CD14-positive monocyte (primary cell): ENCODE measurements at regions of chr3 and their contacts with region 1.

Region 1: GRCh38 chr3:190204200-190204599 is 83.5 kb upstream of the P3H2 start:
- DNase-seq: no peak
- H3K4me3 ChIP-seq: no peak overlapping the region
- H3K4me3 Mint-ChIP-seq: no peak overlapping the region
- H3K27ac ChIP-seq: no peak overlapping the region
- H3K27ac Mint-ChIP-seq: peak overlapping the region in 1 of 7 donors; percentile 33
- H3K4me1 ChIP-seq: peaks cover 0 to 2% of the 10 kb centered on the region in 2 donors
- H3K4me1 Mint-ChIP-seq: peaks cover 7% of the 10 kb centered on the region
- H3K27me3 ChIP-seq: no peaks in the 10 kb centered on the region
- H3K27me3 Mint-ChIP-seq: peaks cover 0 to 5% (median 3%) of the 10 kb centered on the region in 3 donors
- CTCF ChIP-seq: no peak

Region 2: DNA sequence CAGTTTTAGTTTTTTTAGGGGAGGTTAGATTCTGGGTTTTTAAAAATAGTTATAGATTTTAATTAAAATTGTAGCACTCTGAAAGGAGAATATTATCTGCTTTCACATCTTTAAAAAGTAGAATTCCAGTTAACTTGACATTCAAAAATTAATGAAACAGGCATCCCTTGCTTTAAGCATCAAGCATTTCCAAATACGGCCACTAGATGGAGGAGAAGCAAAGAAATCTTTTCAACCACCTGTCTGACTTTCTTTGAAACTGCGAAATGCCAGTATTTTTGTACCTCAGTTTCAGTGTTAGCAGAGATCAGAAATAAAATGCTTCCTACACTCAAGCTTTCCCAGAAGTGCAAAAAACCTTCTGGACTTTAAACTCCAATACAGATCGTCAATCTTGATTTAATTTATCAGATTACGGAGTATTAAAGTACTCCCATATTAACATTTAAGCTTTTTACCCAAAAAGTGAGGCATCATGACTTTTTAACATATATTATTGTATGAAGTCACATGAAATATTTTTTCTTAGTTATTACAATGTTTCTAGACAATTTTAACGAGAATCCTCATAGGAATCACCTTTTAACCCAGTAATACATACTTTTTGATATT is 236.8 kb before region 1 on chr3:
- intact Hi-C with region 1: loop called (anchors 5 to 10 kb)
- DNase-seq: peak; percentile 4 to 26 (median 23)
- H3K4me3 ChIP-seq: no peak overlapping the region
- H3K4me3 Mint-ChIP-seq: no peak overlapping the region
- H3K27ac ChIP-seq: no peak overlapping the region
- H3K27ac Mint-ChIP-seq: no peak overlapping the region
- H3K4me1 ChIP-seq: no peaks in the 10 kb centered on the region
- H3K4me1 Mint-ChIP-seq: no peaks in the 10 kb centered on the region
- H3K27me3 ChIP-seq: no peaks in the 10 kb centered on the region
- H3K27me3 Mint-ChIP-seq: peaks cover 0 to 3% (median 2%) of the 10 kb centered on the region in 3 donors
- CTCF ChIP-seq: peak; percentile 84

Region 3: DNA sequence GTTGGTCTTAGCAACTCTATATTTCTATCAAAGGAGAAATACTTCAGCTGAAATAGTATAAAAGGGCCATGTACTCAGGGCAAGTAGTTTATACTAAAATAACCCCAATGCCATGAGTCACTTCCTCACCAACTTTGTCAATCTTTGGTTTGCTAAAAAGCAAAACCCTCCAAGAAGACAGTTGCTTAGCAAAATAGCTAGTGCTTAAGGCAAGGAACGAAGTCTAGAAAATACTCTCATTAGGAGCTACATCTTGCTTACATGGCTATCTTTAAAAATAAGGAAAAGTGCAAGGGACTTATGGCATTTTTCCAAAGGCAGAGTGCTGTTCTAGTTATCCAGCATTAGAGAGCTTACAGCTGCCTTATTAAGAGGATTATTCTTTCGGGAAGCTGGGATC is 112.0 kb before region 1 on chr3:
- intact Hi-C with region 1: no loop called
- DNase-seq: peak; percentile 5 to 15 (median 12)
- H3K4me3 ChIP-seq: no peak overlapping the region
- H3K4me3 Mint-ChIP-seq: peak overlapping the region in 1 of 2 donors; percentile 53
- H3K27ac ChIP-seq: no peak overlapping the region
- H3K27ac Mint-ChIP-seq: peak overlapping the region in 1 of 7 donors; percentile 45
- H3K4me1 ChIP-seq: peaks cover 10 to 14% of the 10 kb centered on the region in 2 donors
- H3K4me1 Mint-ChIP-seq: peaks cover 14% of the 10 kb centered on the region
- H3K27me3 ChIP-seq: no peaks in the 10 kb centered on the region
- H3K27me3 Mint-ChIP-seq: peaks cover 0 to 2% (median 2%) of the 10 kb centered on the region in 3 donors
- CTCF ChIP-seq: no peak